Activated CD4-positive, alpha-beta T cell treated with anti-CD3 and anti-CD28 coated beads, Interleukin-2, amount 10 ng/mL, durations not matched to agents 7 days and 5 days (primary cell): ENCODE measurements at regions of chr14 and their contacts with region 1.

Region 1: GRCh38 chr14:34098045-34098984 is 147.4 kb upstream of the EGLN3 start:
- DNase-seq: peak; percentile 47
- H3K4me3 Mint-ChIP-seq: no peak overlapping the region
- H3K27ac Mint-ChIP-seq: peak overlapping the region; percentile 61
- H3K4me1 Mint-ChIP-seq: peaks cover 47% of the 10 kb centered on the region
- H3K27me3 Mint-ChIP-seq: peaks cover 1% of the 10 kb centered on the region

Region 2: GRCh38 chr14:33839193-33840076 is 258.9 kb before region 1 on chr14:
- CTCF ChIA-PET with region 1: interaction called, 16 read pairs
- POLR2A ChIA-PET with region 1: no interaction called
- DNase-seq: peak; percentile 73
- H3K4me3 Mint-ChIP-seq: no peak overlapping the region
- H3K27ac Mint-ChIP-seq: no peak overlapping the region
- H3K4me1 Mint-ChIP-seq: peaks cover 26% of the 10 kb centered on the region
- H3K27me3 Mint-ChIP-seq: peaks cover 3% of the 10 kb centered on the region

Region 3: GRCh38 chr14:34113005-34113511 is 14.7 kb after region 1 on chr14:
- CTCF ChIA-PET with region 1: no interaction called
- POLR2A ChIA-PET with region 1: no interaction called
- DNase-seq: no peak
- H3K4me3 Mint-ChIP-seq: no peak overlapping the region
- H3K27ac Mint-ChIP-seq: no peak overlapping the region
- H3K4me1 Mint-ChIP-seq: no peaks in the 10 kb centered on the region
- H3K27me3 Mint-ChIP-seq: peaks cover 51% of the 10 kb centered on the region